H1 (cell line): ENCODE measurements at regions of chr5 and their contacts with region 1.

Region 1: DNA sequence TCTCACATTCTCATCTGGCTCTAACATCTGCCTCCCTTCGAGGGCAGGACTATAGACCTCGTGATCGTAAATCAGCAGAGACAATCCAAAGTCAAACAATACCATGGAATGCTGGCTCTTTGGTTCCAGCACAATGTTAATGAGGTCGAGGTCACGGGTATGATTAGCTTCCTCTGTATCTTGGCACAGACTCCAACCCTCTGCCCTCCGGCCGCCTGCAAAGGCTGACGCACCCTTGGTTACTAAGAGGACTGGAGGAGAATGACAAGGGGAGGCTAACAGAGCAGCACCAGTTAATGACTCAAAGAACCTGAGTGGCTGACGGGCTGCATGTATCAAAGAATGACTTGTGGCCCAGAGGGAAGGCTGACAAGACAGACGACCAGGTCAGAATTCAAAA is 10.1 kb downstream of the LHFPL2 start:
- DNase-seq: no peak
- H3K4me3 ChIP-seq: no peak overlapping the region
- H3K27ac ChIP-seq: no peak overlapping the region
- H3K4me1 ChIP-seq: peaks cover 2 to 20% (median 12%) of the 10 kb centered on the region in 4 experiments
- H3K27me3 ChIP-seq: peaks cover 0 to 1% (median 0%) of the 10 kb centered on the region in 4 experiments; a peak in 1 of 7 replicates
- CTCF ChIP-seq: no peak
- EP300 ChIP-seq: no peak
- POLR2A ChIP-seq: no peak
- RAD21 ChIP-seq: no peak

Region 2: DNA sequence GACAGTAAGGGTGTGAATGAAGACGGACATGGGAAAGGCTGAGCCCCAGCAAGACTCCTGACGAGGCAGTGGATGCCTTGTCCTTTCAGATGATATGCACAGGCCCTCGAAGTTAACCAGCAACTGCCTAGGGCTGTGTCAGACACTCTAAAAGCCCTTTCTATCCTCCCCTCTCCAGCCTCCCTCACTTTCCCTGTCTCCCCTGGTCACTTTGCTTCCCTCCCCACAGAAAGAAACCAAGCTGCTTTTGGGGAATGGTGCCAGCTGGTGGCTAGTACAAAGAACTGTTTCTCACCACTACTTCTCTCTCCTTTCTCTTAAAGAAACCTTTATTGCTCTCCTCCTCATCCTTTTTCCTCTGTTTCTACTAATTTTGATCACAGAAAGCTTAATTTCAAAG is 11.2 kb before region 1 on chr5:
- CTCF ChIA-PET with region 1: interaction called, 13 read pairs
- POLR2A ChIA-PET with region 1: interaction called, 3 read pairs
- DNase-seq: no peak
- H3K4me3 ChIP-seq: no peak overlapping the region
- H3K27ac ChIP-seq: no peak overlapping the region
- H3K4me1 ChIP-seq: peaks cover 0 to 4% (median 0%) of the 10 kb centered on the region in 4 experiments; a peak in 1 of 7 replicates
- H3K27me3 ChIP-seq: no peaks in the 10 kb centered on the region
- CTCF ChIP-seq: peak in 2 of 3 experiments; percentile 45 to 50; a peak in 2 of 4 replicates
- EP300 ChIP-seq: no peak
- POLR2A ChIP-seq: no peak
- RAD21 ChIP-seq: peak; percentile 70 to 74